ENCODE measurements at regions of chr11 and their contacts with region 1.

Region 1: DNA sequence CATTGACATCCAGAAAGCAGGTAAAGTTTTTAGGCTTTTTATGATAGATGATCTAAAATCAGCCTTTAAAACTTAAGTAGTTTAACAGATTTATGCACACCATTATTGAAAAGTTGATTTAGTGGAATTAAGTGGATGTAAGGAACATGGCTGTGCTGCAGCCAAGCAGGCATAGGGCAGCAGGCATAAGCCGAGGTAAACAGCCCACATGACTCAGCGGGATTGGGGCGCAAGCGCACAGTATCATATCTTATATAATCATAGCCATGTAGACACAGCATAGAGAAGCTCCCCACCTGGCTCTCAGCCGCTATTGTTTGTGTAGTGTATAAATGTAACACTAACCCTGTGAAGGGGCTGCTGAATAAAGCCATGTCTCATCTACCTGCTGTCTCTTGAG is 157.5 kb downstream of the WNT11 start:
- DNase-seq: no peak
- ATAC-seq: no peak
- H3K4me3 ChIP-seq: no peak overlapping the region
- H3K27ac ChIP-seq: no peak overlapping the region
- H3K4me1 ChIP-seq: peaks cover 0 to 16% (median 4%) of the 10 kb centered on the region in 12 donors
- H3K27me3 ChIP-seq: no peaks in the 10 kb centered on the region
- CTCF ChIP-seq: no peak
- POLR2A ChIP-seq: no peak

Region 2: GRCh38 chr11:75513250-75513649 is 535.5 kb before region 1 on chr11:
- intact Hi-C with region 1: no loop called
- DNase-seq: peak in 1 of 5 donors; percentile 14
- ATAC-seq: peak in 2 of 4 donors; percentile 18 to 58
- H3K4me3 ChIP-seq: no peak overlapping the region
- H3K27ac ChIP-seq: no peak overlapping the region
- H3K4me1 ChIP-seq: peaks cover 0 to 14% (median 0%) of the 10 kb centered on the region in 12 donors
- H3K27me3 ChIP-seq: no peaks in the 10 kb centered on the region
- CTCF ChIP-seq: no peak
- POLR2A ChIP-seq: no peak

Region 3: GRCh38 chr11:75797792-75798191 is 251.0 kb before region 1 on chr11:
- intact Hi-C with region 1: no loop called
- DNase-seq: no peak
- ATAC-seq: no peak
- H3K4me3 ChIP-seq: no peak overlapping the region
- H3K27ac ChIP-seq: no peak overlapping the region
- H3K4me1 ChIP-seq: peaks cover 0 to 23% (median 7%) of the 10 kb centered on the region in 12 donors
- H3K27me3 ChIP-seq: no peaks in the 10 kb centered on the region
- CTCF ChIP-seq: no peak
- POLR2A ChIP-seq: no peak

Region 4: GRCh38 chr11:75919525-75919924 is 129.2 kb before region 1 on chr11:
- intact Hi-C with region 1: loop called in 1 of 10 experiments (anchors 10 kb)
- DNase-seq: no peak
- ATAC-seq: peak; percentile 51 to 85 (median 62)
- H3K4me3 ChIP-seq: no peak overlapping the region
- H3K27ac ChIP-seq: no peak overlapping the region
- H3K4me1 ChIP-seq: peaks cover 0 to 23% (median 4%) of the 10 kb centered on the region in 12 donors
- H3K27me3 ChIP-seq: no peaks in the 10 kb centered on the region
- CTCF ChIP-seq: no peak
- POLR2A ChIP-seq: no peak

Region 5: DNA sequence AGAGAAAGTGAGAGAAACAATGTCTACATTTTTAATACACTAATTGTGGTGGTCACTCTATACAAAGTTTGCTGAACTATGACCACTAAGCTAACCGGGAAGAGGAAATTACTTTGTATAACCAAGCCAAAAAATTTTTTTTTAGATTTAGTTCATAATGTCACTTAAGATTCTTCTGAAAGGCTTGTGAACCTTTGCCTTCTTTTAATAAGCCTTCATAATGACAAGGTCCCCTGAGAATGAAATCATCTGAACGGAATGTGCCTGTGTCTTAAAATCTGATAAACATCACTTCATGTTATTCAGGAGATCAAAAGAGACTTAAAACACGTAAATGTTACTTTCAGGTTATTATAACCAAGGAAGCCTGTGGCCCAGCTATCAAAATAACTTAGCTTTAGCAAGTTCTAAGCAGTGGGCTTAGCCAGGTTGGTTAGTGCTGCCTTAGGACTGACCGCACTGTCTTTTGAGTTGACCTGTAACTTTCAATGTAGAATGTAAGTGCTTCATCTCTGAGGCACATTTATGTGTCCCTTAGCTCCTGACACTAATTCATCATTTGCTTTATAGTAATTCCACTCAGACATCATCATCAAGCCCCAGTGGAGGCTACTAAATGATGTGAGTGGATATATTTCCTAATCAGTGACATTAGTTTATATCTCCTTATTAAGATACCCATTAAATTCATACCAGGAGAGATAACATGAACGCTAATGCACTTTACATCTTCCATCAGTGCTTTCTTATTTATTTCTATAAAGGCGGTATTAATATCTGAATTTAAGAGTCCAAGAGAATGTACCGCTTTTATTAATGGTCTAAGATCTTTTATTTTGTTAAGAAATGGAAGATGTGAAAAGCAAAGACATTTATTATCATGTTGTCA is 35.0 kb after region 1 on chr11:
- intact Hi-C with region 1: loop called in 1 of 10 experiments (anchors 5 kb)
- DNase-seq: no peak
- ATAC-seq: peak in 3 of 4 donors; percentile 55 to 84 (median 59)
- H3K4me3 ChIP-seq: no peak overlapping the region
- H3K27ac ChIP-seq: peak overlapping the region; percentile 22 to 79 (median 54)
- H3K4me1 ChIP-seq: peaks cover 0 to 25% (median 10%) of the 10 kb centered on the region in 12 donors
- H3K27me3 ChIP-seq: no peaks in the 10 kb centered on the region
- CTCF ChIP-seq: no peak
- POLR2A ChIP-seq: no peak